ENCODE measurements at regions of chr22 and their contacts with region 1.

Region 1: DNA sequence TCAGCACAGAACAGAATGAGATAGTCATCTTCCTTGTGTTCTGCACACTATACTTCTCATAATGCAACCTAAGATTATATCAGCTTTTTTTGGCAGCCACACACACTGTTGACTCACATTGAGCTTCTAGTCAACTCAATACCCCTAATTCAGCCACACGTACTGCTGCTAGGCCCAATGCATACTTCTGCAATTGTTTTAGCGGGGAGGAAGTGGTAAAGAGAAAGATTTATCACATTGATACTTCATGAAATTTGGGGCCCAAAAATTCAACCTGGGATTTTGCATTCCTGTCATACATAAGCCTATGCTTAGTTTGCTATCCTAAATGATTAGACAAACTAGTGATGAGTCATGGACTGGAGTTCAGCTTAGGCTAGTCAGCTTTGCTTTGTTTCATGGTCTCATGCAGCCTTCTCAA is 8.6 kb upstream of the UPB1 start:
- DNase-seq: peak; percentile 42
- H3K4me3 Mint-ChIP-seq: no peak overlapping the region
- H3K27ac Mint-ChIP-seq: peak overlapping the region; percentile 48
- H3K4me1 Mint-ChIP-seq: peaks cover 39% of the 10 kb centered on the region
- H3K27me3 Mint-ChIP-seq: peaks cover 15% of the 10 kb centered on the region

Region 2: DNA sequence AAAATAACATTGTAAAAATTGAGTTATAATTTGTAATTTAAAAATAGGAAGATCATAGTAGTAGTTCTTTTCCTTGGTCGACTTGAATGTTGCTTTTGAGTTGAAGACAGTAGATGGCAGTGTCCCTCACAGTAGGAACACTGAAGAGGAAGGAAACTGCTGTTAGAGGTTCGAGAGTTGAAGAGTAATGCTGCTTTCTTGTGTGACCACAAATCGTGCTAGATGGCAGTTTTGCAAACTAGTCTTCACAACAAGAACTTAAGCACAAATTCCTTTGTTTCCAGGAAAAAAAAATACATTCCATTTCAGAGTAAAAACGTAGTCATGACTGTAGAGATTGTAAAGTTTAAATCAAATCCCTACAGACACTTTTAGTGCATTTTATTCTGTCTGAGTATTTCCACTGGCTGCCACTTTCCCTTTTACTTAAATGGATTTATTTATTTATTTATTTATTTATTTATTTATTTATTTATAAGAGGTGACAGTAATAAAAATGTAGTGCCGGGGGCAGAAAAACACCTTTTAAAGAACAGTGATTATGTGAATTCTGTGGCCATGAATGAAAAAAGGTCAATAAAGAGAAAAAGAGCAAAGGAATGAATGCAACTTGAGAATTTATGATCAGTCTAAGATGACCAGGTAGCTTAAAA is 161.3 kb before region 1 on chr22:
- CTCF ChIA-PET with region 1: no interaction called
- POLR2A ChIA-PET with region 1: no interaction called
- DNase-seq: peak; percentile 27
- H3K4me3 Mint-ChIP-seq: no peak overlapping the region
- H3K27ac Mint-ChIP-seq: peak overlapping the region; percentile 40
- H3K4me1 Mint-ChIP-seq: peaks cover 39% of the 10 kb centered on the region
- H3K27me3 Mint-ChIP-seq: no peaks in the 10 kb centered on the region

Region 3: GRCh38 chr22:24503137-24503842 is 16.8 kb after region 1 on chr22:
- CTCF ChIA-PET with region 1: interaction called, 10 read pairs
- POLR2A ChIA-PET with region 1: no interaction called
- DNase-seq: peak; percentile 66
- H3K4me3 Mint-ChIP-seq: no peak overlapping the region
- H3K27ac Mint-ChIP-seq: no peak overlapping the region
- H3K4me1 Mint-ChIP-seq: peaks cover 16% of the 10 kb centered on the region
- H3K27me3 Mint-ChIP-seq: peaks cover 3% of the 10 kb centered on the region

Region 4: DNA sequence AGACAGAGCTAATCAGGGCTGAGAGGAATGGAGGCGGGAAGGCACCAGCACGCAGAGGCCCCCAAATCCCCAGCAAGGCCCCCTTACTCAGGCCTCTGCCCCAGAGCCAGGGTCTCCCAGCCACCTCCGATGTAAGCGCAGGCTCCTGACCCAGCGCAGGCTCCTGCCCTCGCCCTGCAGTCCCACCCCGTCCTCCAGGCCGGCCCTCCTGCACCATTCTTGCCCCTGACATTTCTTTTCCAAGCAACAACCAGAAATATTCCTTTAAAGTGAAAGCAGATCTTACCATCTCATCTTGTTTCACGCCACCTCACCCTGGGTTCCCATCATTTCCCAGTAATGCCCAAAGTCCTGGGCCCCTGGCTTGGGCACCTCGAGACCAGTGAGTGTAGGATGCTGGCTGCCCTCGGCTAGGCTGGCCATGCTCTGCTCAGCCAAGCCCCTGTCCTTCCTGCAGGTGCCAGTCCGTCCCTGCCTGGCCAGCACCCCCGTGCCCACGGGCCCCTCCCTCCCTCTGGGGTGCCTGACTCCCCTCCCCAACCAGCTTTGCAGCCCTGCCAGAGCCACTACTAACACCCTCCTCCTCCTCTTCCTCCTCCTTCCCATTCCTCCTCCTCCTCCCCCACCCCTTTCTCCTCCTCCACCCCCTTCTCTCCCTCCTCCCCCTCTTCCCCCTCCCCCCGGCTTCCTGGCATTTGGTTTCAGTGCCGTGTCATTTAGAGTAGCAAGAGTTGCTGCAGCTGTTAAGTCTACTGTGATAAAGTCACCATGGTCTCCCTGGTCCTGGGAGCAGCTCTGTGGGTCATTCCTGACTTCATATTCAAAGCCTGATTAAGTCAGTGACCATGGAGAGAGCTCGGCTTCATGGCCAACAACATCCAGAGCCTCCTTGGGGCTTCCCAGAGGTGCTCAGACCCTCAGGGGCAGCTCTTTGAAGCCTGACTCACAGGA is 209.3 kb after region 1 on chr22:
- CTCF ChIA-PET with region 1: no interaction called
- POLR2A ChIA-PET with region 1: no interaction called
- DNase-seq: no peak
- H3K4me3 Mint-ChIP-seq: no peak overlapping the region
- H3K27ac Mint-ChIP-seq: no peak overlapping the region
- H3K4me1 Mint-ChIP-seq: no peaks in the 10 kb centered on the region
- H3K27me3 Mint-ChIP-seq: peaks cover 10% of the 10 kb centered on the region

Measured in activated CD4-positive, alpha-beta memory T cell treated with anti-CD3 and anti-CD28 coated beads, Interleukin-2, amount 10 ng/mL, durations not matched to agents 7 days and 5 days (primary cell).